Activated CD8-positive, alpha-beta memory T cell treated with anti-CD3 and anti-CD28 coated beads, Interleukin-2, amount 10 ng/mL, durations not matched to agents 7 days and 5 days (primary cell): ENCODE measurements at regions of chr14 and their contacts with region 1.

Region 1: DNA sequence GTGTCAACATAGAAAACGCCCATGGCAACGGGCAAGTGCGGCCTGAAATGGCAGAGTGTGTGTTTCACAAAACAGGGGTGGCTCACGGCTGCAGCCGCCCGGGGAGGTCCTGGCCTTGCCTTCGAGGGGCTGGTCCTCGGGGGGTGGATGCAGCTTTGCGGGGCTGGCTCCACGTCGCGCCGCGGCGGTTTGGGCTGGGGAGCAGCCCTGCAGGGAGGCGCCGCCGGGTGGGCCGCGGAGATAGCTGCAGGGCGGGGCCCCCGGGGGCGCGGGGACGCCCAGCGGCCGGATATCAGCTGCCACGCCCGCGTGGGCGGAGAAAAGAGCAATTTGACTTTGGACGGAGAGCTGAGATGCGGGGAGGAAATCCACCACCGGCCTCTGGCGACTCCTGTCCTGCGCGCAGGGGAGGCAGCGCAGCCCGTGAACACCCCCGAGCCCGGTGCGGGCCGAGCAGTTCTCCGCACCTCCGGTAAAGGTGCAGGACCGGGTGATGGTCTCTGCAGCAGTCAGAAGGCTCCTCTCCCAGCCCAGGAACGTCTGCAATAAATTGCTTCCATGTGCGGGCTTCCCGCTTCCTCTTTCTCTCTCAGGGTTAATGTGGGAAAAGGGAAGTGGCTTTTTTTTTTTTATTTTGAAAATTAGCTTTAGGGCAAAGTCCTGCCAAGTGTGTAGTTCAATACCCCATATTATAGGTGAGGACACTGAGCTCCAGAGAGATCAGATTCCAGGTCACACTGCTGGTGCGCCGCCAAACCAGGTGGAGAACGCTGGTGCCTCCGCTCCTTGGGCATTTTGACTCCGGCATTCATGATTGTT is 110.5 kb downstream of the ARF6 start:
- DNase-seq: peak; percentile 90
- ATAC-seq: peak; percentile 29
- H3K4me3 Mint-ChIP-seq: peak overlapping the region; percentile 87
- H3K27ac Mint-ChIP-seq: peak overlapping the region; percentile 96
- H3K4me1 Mint-ChIP-seq: peaks cover 67% of the 10 kb centered on the region
- H3K27me3 Mint-ChIP-seq: no peaks in the 10 kb centered on the region

Region 2: DNA sequence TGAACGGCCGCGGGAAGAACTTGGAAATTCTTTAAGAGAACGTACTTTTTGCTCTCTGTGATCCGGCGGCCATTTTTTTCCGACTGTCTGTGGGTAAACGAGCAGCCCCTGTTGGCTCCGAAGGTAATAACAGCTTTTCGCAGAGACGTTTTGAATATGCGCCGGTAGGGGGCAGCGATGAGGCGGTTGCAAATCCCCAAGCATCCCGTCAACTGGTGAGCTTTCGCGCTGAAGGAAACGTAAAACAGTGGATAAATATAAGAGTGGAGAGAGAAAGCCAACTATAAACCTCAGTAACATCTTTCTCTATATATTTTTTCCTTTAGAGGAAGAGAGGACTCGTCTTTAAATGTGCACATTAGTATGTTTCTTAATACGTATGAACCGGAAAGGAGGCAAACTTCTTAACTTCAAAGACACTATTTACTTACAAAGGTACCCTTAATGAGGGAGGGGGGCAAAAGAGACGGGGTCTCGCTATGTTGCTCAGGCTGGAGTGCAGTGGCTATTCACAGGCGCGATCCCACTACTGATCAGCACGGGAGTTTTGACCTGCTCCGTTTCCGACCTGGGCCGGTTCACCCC is 141.2 kb before region 1 on chr14:
- CTCF ChIA-PET with region 1: interaction called, 131 read pairs
- DNase-seq: peak; percentile 93
- ATAC-seq: peak; percentile 10
- H3K4me3 Mint-ChIP-seq: no peak overlapping the region
- H3K27ac Mint-ChIP-seq: no peak overlapping the region
- H3K4me1 Mint-ChIP-seq: peaks cover 32% of the 10 kb centered on the region
- H3K27me3 Mint-ChIP-seq: no peaks in the 10 kb centered on the region

Region 3: GRCh38 chr14:49892636-49893308 is 110.7 kb before region 1 on chr14 and contains the start of gene ARF6:
- CTCF ChIA-PET with region 1: interaction called, 10 read pairs
- DNase-seq: peak; percentile 99
- ATAC-seq: peak; percentile 91
- H3K4me3 Mint-ChIP-seq: peak within 1 kb of the TSS; percentile 94
- H3K27ac Mint-ChIP-seq: peak within 1 kb of the TSS; percentile 99
- H3K4me1 Mint-ChIP-seq: peaks cover 18% of the 10 kb centered on the region
- H3K27me3 Mint-ChIP-seq: no peaks in the 10 kb centered on the region
- total RNA-seq, gene ARF6: 171 to 190 TPM

Region 4: DNA sequence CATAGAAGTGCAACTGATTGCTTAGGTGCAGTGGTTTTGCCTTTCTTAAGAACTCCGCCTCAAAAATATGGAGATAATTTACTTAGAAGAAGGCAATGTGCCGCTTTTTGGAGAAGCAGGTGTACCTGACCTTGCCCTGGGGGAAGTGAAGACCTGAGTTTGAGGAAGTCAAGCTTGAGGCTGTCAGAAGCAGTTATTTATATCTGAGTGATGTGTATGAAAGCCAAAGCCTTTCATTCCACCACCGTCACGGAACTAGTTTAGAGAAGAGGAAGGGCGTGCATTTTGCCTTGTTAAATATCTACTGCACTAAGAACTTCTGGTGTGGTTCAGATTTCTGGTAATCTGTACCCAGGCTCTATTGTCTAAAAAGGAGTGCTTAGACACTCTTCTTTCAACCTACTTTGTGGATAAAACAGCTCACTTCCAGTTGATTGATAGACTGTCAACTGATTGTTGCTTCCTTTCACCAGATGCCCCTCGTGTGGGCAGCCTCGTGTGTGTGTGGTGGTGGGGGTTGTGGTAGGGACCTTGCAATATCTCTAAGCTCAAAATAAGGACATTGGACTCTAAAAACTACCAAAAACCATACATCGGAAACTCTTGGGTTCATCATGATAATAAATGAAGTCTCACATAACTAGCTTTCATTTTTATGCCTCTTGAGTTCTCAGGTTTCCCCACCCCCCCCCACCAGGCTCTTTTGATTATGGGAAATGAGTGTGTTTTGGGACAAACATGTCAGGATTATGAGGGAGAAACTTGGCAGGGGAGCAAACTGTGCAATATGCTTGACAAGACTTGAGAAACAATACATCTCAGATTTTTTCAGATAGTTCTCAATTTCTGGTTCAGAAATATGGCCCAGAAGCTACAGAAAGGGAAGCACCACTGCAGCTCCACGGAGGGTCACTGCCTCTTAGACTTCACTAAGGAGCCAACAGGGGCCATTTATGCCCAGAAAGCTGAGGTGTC is 32.0 kb before region 1 on chr14:
- CTCF ChIA-PET with region 1: interaction called, 47 read pairs
- DNase-seq: peak; percentile 87
- ATAC-seq: peak; percentile 66
- H3K4me3 Mint-ChIP-seq: peak overlapping the region; percentile 74
- H3K27ac Mint-ChIP-seq: peak overlapping the region; percentile 99
- H3K4me1 Mint-ChIP-seq: peaks cover 67% of the 10 kb centered on the region
- H3K27me3 Mint-ChIP-seq: no peaks in the 10 kb centered on the region

Region 5: DNA sequence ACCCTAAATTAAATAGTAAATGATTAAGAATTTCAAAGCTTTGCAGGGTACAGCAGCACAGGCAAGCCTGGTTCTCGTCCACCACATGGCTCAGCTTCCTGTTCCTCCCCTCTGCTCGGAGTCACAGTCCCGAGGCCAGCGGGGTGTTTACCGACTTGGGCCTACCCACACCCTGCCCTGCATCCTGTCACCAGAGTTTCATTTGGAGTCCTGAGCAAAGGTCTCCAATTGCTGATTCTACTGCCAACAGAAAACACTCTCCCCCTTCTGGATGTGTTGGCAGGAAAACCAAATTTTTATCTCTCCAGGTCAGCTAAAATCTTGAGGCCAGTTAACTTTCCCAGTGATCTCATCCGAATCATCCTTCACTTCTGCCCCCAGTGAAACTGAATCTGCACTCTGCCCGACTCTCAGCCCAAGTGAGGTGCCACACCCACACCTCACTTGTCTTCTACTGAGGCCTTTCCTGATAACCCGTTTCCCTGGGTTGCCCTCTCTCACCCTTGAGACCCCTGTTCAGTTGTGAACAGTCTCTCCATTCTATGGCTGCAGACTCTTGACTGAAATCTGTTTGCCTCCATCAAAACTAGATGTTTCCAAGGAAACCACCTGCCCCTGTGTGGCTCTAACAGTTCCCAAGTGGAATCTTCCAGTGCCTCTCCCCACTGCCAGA is 41.8 kb after region 1 on chr14:
- CTCF ChIA-PET with region 1: interaction called, 50 read pairs
- DNase-seq: peak; percentile 95
- ATAC-seq: peak; percentile 87
- H3K4me3 Mint-ChIP-seq: peak overlapping the region; percentile 2
- H3K27ac Mint-ChIP-seq: peak overlapping the region; percentile 91
- H3K4me1 Mint-ChIP-seq: peaks cover 63% of the 10 kb centered on the region
- H3K27me3 Mint-ChIP-seq: no peaks in the 10 kb centered on the region

Region 6: GRCh38 chr14:50085570-50086320 is 82.3 kb after region 1 on chr14:
- CTCF ChIA-PET with region 1: interaction called, 19 read pairs
- DNase-seq: peak; percentile 56
- ATAC-seq: no peak
- H3K4me3 Mint-ChIP-seq: peak overlapping the region; percentile 52
- H3K27ac Mint-ChIP-seq: peak overlapping the region; percentile 95
- H3K4me1 Mint-ChIP-seq: peaks cover 91% of the 10 kb centered on the region
- H3K27me3 Mint-ChIP-seq: no peaks in the 10 kb centered on the region

Region 7: GRCh38 chr14:50225067-50225973 is 221.9 kb after region 1 on chr14:
- CTCF ChIA-PET with region 1: no interaction called
- DNase-seq: no peak
- ATAC-seq: no peak
- H3K4me3 Mint-ChIP-seq: no peak overlapping the region
- H3K27ac Mint-ChIP-seq: no peak overlapping the region
- H3K4me1 Mint-ChIP-seq: peaks cover 32% of the 10 kb centered on the region
- H3K27me3 Mint-ChIP-seq: no peaks in the 10 kb centered on the region